Vagina (tissue), 2 donors: ENCODE measurements at regions of chr17 and their contacts with region 1.

Region 1: GRCh38 chr17:82917691-82918345 is 78.0 kb upstream of the ZNF750 start:
- DNase-seq: no peak
- H3K4me3 ChIP-seq: no peak overlapping the region
- H3K27ac ChIP-seq: no peak overlapping the region
- H3K4me1 ChIP-seq: no peaks in the 10 kb centered on the region
- H3K27me3 ChIP-seq: no peaks in the 10 kb centered on the region
- CTCF ChIP-seq: peak in 1 of 3 experiments; percentile 20
- POLR2A ChIP-seq: no peak

Region 2: GRCh38 chr17:82781894-82782274 is 135.9 kb before region 1 on chr17:
- intact Hi-C with region 1: loop called (anchors 10 kb)
- DNase-seq: peak in 1 of 2 donors; percentile 85
- H3K4me3 ChIP-seq: no peak overlapping the region
- H3K27ac ChIP-seq: no peak overlapping the region
- H3K4me1 ChIP-seq: peaks cover 14% of the 10 kb centered on the region
- H3K27me3 ChIP-seq: no peaks in the 10 kb centered on the region
- CTCF ChIP-seq: peak; percentile 93 to 96 (median 96)
- POLR2A ChIP-seq: no peak